Activated B cell treated with CpG ODN at 0.5 μM for 24 hours (primary cell): ENCODE measurements at regions of chr2 and their contacts with region 1.

Region 1: GRCh38 chr2:60881047-60881932 is at the start of gene REL:
- DNase-seq: peak; percentile 88
- ATAC-seq: peak; percentile 73
- H3K4me3 Mint-ChIP-seq: peak within 1 kb of the TSS; percentile 98
- H3K27ac Mint-ChIP-seq: peak within 1 kb of the TSS; percentile 95
- H3K4me1 Mint-ChIP-seq: peaks cover 36% of the 10 kb centered on the region
- H3K27me3 Mint-ChIP-seq: no peaks in the 10 kb centered on the region
- CTCF ChIP-seq: no peak
- total RNA-seq, gene REL: 211 and 238 TPM in 2 replicates

Region 2: DNA sequence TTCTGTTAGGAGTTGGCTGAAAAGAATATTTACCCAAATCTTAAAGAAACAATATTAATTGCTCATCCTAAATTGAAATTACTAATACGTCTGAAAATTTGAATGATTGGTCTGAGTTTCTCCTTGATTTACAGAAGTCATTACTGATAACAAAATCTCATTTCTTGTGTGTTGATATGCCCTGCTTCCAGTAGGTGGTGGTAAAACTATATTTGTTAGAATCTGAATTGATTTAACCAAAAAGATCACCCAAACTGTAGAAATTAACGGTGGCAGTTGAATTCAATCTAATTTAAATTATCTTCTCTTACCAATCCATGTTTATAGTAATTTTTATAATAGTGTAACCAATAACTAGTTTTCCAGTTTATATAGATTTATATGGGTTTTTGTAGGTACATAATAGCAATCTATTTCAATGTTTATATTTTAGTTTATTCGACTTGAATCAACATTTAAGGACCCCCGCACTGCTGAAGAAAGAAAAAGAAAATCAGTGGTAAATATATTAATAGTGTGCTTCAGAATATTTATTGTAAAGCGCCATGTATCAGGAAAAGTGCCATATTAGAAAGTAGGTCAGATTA is 86.9 kb before region 1 on chr2:
- CTCF ChIA-PET with region 1: interaction called, 5 read pairs
- POLR2A ChIA-PET with region 1: interaction called, 65 read pairs
- intact Hi-C with region 1: loop called (anchors 1 kb)
- DNase-seq: no peak
- ATAC-seq: peak; percentile 46
- H3K4me3 Mint-ChIP-seq: no peak overlapping the region
- H3K27ac Mint-ChIP-seq: no peak overlapping the region
- H3K4me1 Mint-ChIP-seq: peaks cover 31% of the 10 kb centered on the region
- H3K27me3 Mint-ChIP-seq: no peaks in the 10 kb centered on the region
- CTCF ChIP-seq: peak; percentile 46

Region 3: DNA sequence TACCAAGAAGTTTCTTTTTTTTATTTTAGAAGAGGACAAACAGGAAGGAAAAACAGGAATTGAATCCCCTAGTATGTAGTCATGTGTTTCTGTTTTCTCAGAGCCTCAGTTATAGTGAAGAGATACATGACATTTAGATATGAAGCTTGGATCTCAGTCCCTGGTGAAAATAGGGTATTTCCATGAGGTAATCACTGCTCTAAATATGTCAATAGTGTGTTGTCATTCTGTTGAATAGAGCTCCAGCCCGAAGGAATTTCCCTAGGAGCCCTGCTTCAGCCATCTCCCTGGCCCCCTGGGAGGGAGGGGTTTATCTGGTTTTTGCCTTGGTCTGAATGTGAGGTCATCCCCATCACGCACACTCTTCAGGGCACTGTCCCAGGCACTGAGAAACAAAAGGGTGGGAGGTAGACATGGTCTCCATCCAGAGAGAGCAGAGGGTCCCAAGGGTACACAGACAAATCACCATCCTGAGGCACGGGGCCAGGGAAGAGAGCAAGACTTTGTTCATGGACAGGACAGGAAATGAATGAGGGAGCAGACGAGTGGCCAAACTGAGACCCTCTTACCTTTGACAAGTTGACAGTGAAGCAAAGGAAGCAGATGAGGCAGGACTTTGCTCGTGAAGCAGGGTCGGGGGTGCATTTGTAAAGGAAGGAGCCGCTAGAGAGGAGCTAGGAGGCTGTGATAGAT is 46.9 kb before region 1 on chr2:
- CTCF ChIA-PET with region 1: interaction called, 54 read pairs
- POLR2A ChIA-PET with region 1: interaction called, 250 read pairs
- intact Hi-C with region 1: loop called (anchors 1 kb)
- DNase-seq: no peak
- ATAC-seq: peak; percentile 71
- H3K4me3 Mint-ChIP-seq: peak overlapping the region; percentile 44
- H3K27ac Mint-ChIP-seq: peak overlapping the region; percentile 92
- H3K4me1 Mint-ChIP-seq: peaks cover 75% of the 10 kb centered on the region
- H3K27me3 Mint-ChIP-seq: no peaks in the 10 kb centered on the region
- CTCF ChIP-seq: no peak

Region 4: GRCh38 chr2:60899230-60899891 is 18.1 kb after region 1 on chr2:
- CTCF ChIA-PET with region 1: no interaction called
- POLR2A ChIA-PET with region 1: interaction called, 43 read pairs
- intact Hi-C with region 1: loop called (anchors 1 kb)
- DNase-seq: no peak
- ATAC-seq: peak; percentile 61
- H3K4me3 Mint-ChIP-seq: peak overlapping the region; percentile 66
- H3K27ac Mint-ChIP-seq: peak overlapping the region; percentile 78
- H3K4me1 Mint-ChIP-seq: peaks cover 47% of the 10 kb centered on the region
- H3K27me3 Mint-ChIP-seq: no peaks in the 10 kb centered on the region
- CTCF ChIP-seq: no peak

Region 5: GRCh38 chr2:60980071-60980815 is 99.0 kb after region 1 on chr2:
- CTCF ChIA-PET with region 1: no interaction called
- POLR2A ChIA-PET with region 1: no interaction called
- intact Hi-C with region 1: no loop called
- DNase-seq: no peak
- ATAC-seq: no peak
- H3K4me3 Mint-ChIP-seq: peak overlapping the region; percentile 20
- H3K27ac Mint-ChIP-seq: peak overlapping the region; percentile 83
- H3K4me1 Mint-ChIP-seq: peaks cover 60% of the 10 kb centered on the region
- H3K27me3 Mint-ChIP-seq: no peaks in the 10 kb centered on the region
- CTCF ChIP-seq: no peak

Region 6: GRCh38 chr2:60992985-60993392 is 111.7 kb after region 1 on chr2:
- CTCF ChIA-PET with region 1: interaction called, 7 read pairs
- POLR2A ChIA-PET with region 1: interaction called, 70 read pairs
- intact Hi-C with region 1: loop called (anchors 1 kb)
- DNase-seq: peak; percentile 41
- ATAC-seq: peak; percentile 94
- H3K4me3 Mint-ChIP-seq: peak overlapping the region; percentile 66
- H3K27ac Mint-ChIP-seq: peak overlapping the region; percentile 98
- H3K4me1 Mint-ChIP-seq: peaks cover 75% of the 10 kb centered on the region
- H3K27me3 Mint-ChIP-seq: no peaks in the 10 kb centered on the region
- CTCF ChIP-seq: no peak

Region 7: DNA sequence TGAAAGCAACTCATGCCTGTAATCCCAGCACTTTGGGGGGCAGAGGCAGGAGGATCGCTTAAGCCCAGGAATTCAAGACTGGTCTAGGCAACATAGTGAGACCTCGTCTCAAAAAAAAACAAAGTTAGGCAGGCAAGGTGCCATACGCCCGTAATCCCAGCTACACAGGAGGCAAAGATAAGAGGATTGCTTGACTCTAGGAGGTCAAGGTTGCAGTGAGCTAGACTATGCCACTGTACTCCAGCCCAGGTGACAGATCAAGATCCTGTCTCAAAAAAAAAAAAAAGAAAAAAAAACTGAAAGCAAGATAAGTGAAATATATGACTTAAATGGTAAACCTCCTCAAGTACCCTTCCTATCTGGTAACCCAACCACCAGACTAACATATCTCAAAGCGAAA is 529.8 kb after region 1 on chr2:
- CTCF ChIA-PET with region 1: no interaction called
- POLR2A ChIA-PET with region 1: no interaction called
- intact Hi-C with region 1: no loop called
- DNase-seq: no peak
- ATAC-seq: no peak
- H3K4me3 Mint-ChIP-seq: no peak overlapping the region
- H3K27ac Mint-ChIP-seq: no peak overlapping the region
- H3K4me1 Mint-ChIP-seq: peaks cover 8% of the 10 kb centered on the region
- H3K27me3 Mint-ChIP-seq: no peaks in the 10 kb centered on the region
- CTCF ChIP-seq: no peak

Region 8: GRCh38 chr2:61470965-61471904 is 589.9 kb after region 1 on chr2 and contains the start of gene USP34:
- CTCF ChIA-PET with region 1: no interaction called
- POLR2A ChIA-PET with region 1: no interaction called
- intact Hi-C with region 1: loop called (anchors 5 kb)
- DNase-seq: peak; percentile 79
- ATAC-seq: peak; percentile 82
- H3K4me3 Mint-ChIP-seq: peak within 1 kb of the TSS; percentile 95
- H3K27ac Mint-ChIP-seq: peak within 1 kb of the TSS; percentile 95
- H3K4me1 Mint-ChIP-seq: peaks cover 38% of the 10 kb centered on the region
- H3K27me3 Mint-ChIP-seq: no peaks in the 10 kb centered on the region
- CTCF ChIP-seq: no peak
- total RNA-seq, gene USP34: 142 and 176 TPM in 2 replicates